ENCODE measurements at regions of chr18 and their contacts with region 1.

Region 1: DNA sequence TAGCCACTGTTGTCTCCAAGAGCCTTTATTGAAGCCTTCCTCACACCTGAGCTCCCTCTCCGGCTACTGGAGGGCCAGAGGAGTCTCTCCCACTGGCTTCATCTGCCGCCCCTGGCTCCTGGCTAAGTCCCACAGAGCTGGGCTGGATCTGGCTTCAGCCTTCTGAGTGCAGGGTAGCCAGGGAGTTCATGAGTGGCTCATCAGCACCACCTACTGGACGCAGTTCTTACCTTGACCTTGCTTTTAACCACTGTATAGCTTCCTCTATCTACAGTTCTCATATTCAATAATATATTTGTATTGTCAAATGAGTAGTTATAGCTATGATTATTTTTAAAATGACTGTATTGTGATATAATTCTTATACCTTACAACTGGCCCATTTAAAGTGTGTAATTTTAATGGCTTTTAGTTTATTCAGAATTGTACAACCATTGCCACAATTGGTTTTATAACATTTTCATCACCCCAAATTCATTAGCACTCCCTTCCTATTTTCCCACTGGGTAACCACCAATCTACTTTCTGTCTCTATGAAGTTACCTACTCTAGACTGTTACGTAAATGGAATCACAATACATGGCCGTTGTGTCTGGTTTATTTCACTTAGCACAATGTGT is 17.7 kb downstream of the CNDP1 start:
- DNase-seq: peak; percentile 81
- ATAC-seq: peak; percentile 96
- H3K4me3 ChIP-seq: no peak overlapping the region
- H3K4me3 Mint-ChIP-seq: no peak overlapping the region
- H3K27ac ChIP-seq: no peak overlapping the region
- H3K27ac Mint-ChIP-seq: no peak overlapping the region
- H3K4me1 ChIP-seq: no peaks in the 10 kb centered on the region
- H3K4me1 Mint-ChIP-seq: no peaks in the 10 kb centered on the region
- H3K27me3 ChIP-seq: no peaks in the 10 kb centered on the region
- H3K27me3 Mint-ChIP-seq: peaks cover 14% of the 10 kb centered on the region
- CTCF ChIP-seq: peak; percentile 92

Region 2: DNA sequence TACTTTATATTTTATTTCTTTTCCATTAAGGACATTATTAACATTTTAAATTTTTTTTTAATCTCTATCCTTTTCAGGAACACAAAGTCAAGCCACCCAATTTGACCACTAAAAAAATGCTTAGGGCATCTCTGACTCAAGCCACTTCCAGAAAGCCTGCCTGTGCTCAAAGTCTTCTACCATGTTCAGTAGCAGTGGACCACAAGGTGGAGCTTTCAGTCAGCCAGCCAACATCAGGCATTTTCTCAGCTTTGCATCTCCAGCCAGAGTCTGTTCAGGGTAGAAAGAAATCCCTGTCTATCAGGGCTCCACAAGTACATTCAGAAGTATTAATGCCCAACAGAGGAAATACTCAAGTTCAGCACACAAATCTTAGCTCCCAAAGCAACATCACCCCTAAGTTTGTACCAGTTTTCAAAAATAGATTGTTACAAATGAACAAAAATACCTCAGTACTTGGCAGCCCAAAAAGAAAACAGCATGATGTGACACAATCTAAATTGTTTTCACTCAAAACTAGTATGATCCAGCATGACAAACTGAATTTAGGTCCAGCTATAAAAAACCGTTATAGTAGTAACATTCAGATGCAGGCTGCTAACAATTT is 198.8 kb before region 1 on chr18:
- CTCF ChIA-PET with region 1: interaction called, 84 read pairs
- POLR2A ChIA-PET with region 1: no interaction called
- intact Hi-C with region 1: loop called (anchors 1 kb)
- DNase-seq: peak; percentile 63
- ATAC-seq: peak; percentile 49
- H3K4me3 ChIP-seq: no peak overlapping the region
- H3K4me3 Mint-ChIP-seq: no peak overlapping the region
- H3K27ac ChIP-seq: no peak overlapping the region
- H3K27ac Mint-ChIP-seq: no peak overlapping the region
- H3K4me1 ChIP-seq: peaks cover 4 to 8% of the 10 kb centered on the region in 2 donors
- H3K4me1 Mint-ChIP-seq: peaks cover 11% of the 10 kb centered on the region
- H3K27me3 ChIP-seq: no peaks in the 10 kb centered on the region
- H3K27me3 Mint-ChIP-seq: no peaks in the 10 kb centered on the region
- CTCF ChIP-seq: peak; percentile 53

Region 3: GRCh38 chr18:74567822-74568221 is 15.8 kb after region 1 on chr18:
- CTCF ChIA-PET with region 1: interaction called, 10 read pairs
- POLR2A ChIA-PET with region 1: no interaction called
- intact Hi-C with region 1: no loop called
- DNase-seq: no peak
- ATAC-seq: no peak
- H3K4me3 ChIP-seq: no peak overlapping the region
- H3K4me3 Mint-ChIP-seq: no peak overlapping the region
- H3K27ac ChIP-seq: no peak overlapping the region
- H3K27ac Mint-ChIP-seq: no peak overlapping the region
- H3K4me1 ChIP-seq: no peaks in the 10 kb centered on the region
- H3K4me1 Mint-ChIP-seq: peaks cover 4% of the 10 kb centered on the region
- H3K27me3 ChIP-seq: peaks cover 0 to 6% (median 0%) of the 10 kb centered on the region in 4 experiments
- H3K27me3 Mint-ChIP-seq: peaks cover 13% of the 10 kb centered on the region
- CTCF ChIP-seq: no peak

Region 4: DNA sequence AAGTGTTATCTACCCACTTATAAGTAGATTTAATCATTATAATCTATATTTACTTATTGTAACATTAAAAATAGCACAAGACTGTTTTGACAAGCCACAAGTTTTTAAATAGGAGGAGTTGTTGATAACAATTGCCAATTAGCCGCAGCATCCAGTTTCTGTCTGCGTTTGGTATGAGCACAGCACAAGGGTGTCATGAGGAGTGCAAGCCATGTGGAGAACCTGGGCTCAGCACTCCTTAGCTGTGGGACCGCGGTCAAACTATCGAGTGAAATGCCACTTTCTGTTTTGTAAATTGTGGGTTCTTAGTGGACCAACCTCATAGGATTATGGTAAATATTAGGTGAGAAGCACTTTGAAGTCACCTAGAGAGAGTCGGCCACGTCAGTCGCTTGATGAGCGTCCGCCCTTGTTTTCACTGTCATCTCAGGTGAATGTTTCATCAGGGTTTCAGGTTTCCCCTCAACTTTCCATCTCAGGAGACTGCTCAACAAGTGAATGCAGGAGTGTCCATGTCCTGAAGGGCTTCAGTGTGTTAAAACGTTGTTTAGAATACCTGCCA is 340.1 kb after region 1 on chr18:
- CTCF ChIA-PET with region 1: no interaction called
- POLR2A ChIA-PET with region 1: no interaction called
- intact Hi-C with region 1: no loop called
- DNase-seq: no peak
- ATAC-seq: no peak
- H3K4me3 ChIP-seq: no peak overlapping the region
- H3K4me3 Mint-ChIP-seq: no peak overlapping the region
- H3K27ac ChIP-seq: no peak overlapping the region
- H3K27ac Mint-ChIP-seq: no peak overlapping the region
- H3K4me1 ChIP-seq: no peaks in the 10 kb centered on the region
- H3K4me1 Mint-ChIP-seq: no peaks in the 10 kb centered on the region
- H3K27me3 ChIP-seq: no peaks in the 10 kb centered on the region
- H3K27me3 Mint-ChIP-seq: no peaks in the 10 kb centered on the region
- CTCF ChIP-seq: no peak